ENCODE measurements at regions of chr10 and their contacts with region 1.

Region 1: GRCh38 chr10:105950410-105950809 is 1214.1 kb downstream of the SORCS1 start:
- DNase-seq: peak; percentile 54
- ATAC-seq: peak; percentile 57 to 58

Region 2: GRCh38 chr10:105914432-105914831 is 36.0 kb before region 1 on chr10:
- intact Hi-C with region 1: no loop called
- DNase-seq: no peak
- ATAC-seq: no peak

Region 3: GRCh38 chr10:106175760-106176377 is 225.5 kb after region 1 on chr10:
- intact Hi-C with region 1: loop called in 1 of 2 experiments (anchors 5 kb)
- DNase-seq: no peak
- ATAC-seq: no peak

Region 4: DNA sequence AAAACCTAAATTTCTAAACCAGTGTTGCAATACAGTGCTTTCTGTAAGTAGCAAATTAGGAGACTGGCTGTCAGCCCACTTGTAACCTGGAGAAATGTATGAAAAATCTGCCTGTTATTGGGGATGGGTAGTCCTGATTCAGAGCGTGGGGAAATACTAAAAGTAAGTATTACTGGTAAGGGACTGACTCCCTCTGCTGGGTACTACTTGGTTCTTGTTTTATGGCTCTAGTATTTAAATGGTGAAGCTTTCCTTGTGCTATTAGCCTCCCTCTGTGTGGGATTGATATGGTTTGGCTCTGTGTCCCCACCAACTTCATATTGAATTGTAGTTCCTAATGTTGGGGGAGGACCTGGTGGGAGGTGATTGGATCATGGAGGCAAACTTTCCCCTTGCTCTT is 328.0 kb after region 1 on chr10:
- intact Hi-C with region 1: loop called in 1 of 2 experiments (anchors 5 kb)
- DNase-seq: no peak
- ATAC-seq: no peak

Region 5: DNA sequence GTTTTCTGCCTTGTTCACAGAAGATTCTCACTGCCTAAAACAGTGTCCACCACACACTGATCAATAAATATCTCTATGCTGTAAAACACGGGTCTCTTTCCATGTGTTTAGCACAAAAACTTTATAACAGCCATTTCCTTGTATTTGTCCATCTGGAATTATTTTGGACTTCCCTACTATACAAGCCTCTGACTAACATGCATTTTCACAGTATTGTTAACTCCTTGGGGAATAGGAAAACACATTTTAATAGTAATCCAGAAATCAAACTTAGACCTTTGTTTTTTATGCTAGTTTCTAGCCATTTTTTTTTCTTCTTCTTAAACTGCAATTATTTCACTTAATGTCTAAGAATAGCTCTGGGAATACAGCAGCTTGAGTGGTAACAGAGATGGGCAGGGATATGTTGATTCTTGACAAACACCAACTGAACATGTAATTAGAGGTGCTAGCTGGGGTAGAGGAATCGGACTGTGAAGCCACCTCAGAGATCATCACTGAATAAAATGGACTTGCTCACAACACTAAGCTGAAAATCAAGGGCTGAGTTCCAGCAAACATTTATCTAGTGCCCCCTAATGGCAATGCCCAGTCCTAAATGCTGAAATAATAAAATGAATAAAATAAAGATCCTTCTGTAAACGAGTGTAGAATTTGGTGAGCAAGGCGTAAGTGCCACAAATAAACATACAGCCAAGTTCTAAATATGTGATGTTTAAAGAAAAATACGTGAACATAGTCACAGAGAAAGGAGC is 621.0 kb after region 1 on chr10:
- intact Hi-C with region 1: loop called in 1 of 2 experiments (anchors 10 kb)
- DNase-seq: no peak
- ATAC-seq: no peak